A673 (cell line): ENCODE measurements at regions of chr3 and their contacts with region 1.

Region 1: GRCh38 chr3:25843332-25843731 is 53.4 kb downstream of the OXSM start:
- DNase-seq: no peak
- H3K4me3 ChIP-seq: no peak overlapping the region
- H3K27ac ChIP-seq: no peak overlapping the region
- H3K4me1 ChIP-seq: no peaks in the 10 kb centered on the region
- H3K27me3 ChIP-seq: no peaks in the 10 kb centered on the region
- CTCF ChIP-seq: peak; percentile 44; the same call in 1 of the 2 replicates

Region 2: GRCh38 chr3:25755257-25755656 is 88.1 kb before region 1 on chr3:
- CTCF ChIA-PET with region 1: no interaction called
- POLR2A ChIA-PET with region 1: no interaction called
- intact Hi-C with region 1: no loop called
- DNase-seq: no peak
- H3K4me3 ChIP-seq: no peak overlapping the region
- H3K27ac ChIP-seq: no peak overlapping the region
- H3K4me1 ChIP-seq: no peaks in the 10 kb centered on the region
- H3K27me3 ChIP-seq: no peaks in the 10 kb centered on the region
- CTCF ChIP-seq: no peak

Region 3: GRCh38 chr3:26712211-26713026 is 869.1 kb after region 1 on chr3:
- CTCF ChIA-PET with region 1: no interaction called
- POLR2A ChIA-PET with region 1: no interaction called
- intact Hi-C with region 1: loop called (anchors 2 kb)
- DNase-seq: peak; percentile 70
- H3K4me3 ChIP-seq: no peak overlapping the region
- H3K27ac ChIP-seq: no peak overlapping the region
- H3K4me1 ChIP-seq: no peaks in the 10 kb centered on the region
- H3K27me3 ChIP-seq: no peaks in the 10 kb centered on the region
- CTCF ChIP-seq: peak; percentile 69

Region 4: DNA sequence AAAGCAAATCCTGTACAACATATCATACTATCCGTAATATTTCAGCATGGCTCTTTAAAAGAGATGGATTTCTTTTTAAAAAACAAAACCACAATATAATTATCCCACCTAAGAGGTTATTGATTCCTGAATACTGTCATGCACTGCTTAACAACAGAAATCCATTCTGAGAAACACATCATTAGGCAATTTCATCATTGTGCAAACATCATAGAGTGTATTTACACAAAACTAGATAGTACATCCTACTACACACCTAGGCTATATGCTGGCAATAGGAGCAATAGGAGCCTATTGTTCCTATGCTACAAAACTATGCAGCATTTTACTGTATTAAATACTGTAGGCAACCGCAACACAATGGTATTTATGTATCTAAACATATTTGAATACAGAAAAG is 1283.9 kb after region 1 on chr3:
- CTCF ChIA-PET with region 1: no interaction called
- POLR2A ChIA-PET with region 1: no interaction called
- intact Hi-C with region 1: loop called (anchors 10 kb)
- DNase-seq: no peak
- H3K4me3 ChIP-seq: no peak overlapping the region
- H3K27ac ChIP-seq: no peak overlapping the region
- H3K4me1 ChIP-seq: no peaks in the 10 kb centered on the region
- H3K27me3 ChIP-seq: no peaks in the 10 kb centered on the region
- CTCF ChIP-seq: no peak